Heart left ventricle (tissue), 16 donors: ENCODE measurements at regions of chr1 and their contacts with region 1.

Region 1: GRCh38 chr1:19918057-19918456 is 5.4 kb downstream of the PLA2G2E start:
- DNase-seq: peak; percentile 74 to 86 (median 79)
- ATAC-seq: peak; percentile 69 to 84 (median 71)
- H3K4me3 ChIP-seq: no peak overlapping the region
- H3K27ac ChIP-seq: no peak overlapping the region
- H3K4me1 ChIP-seq: peaks cover 0 to 11% (median 0%) of the 10 kb centered on the region in 12 donors
- H3K27me3 ChIP-seq: peaks cover 0 to 5% (median 0%) of the 10 kb centered on the region in 9 donors
- CTCF ChIP-seq: peak; percentile 83 to 94 (median 89)
- POLR2A ChIP-seq: no peak

Region 2: DNA sequence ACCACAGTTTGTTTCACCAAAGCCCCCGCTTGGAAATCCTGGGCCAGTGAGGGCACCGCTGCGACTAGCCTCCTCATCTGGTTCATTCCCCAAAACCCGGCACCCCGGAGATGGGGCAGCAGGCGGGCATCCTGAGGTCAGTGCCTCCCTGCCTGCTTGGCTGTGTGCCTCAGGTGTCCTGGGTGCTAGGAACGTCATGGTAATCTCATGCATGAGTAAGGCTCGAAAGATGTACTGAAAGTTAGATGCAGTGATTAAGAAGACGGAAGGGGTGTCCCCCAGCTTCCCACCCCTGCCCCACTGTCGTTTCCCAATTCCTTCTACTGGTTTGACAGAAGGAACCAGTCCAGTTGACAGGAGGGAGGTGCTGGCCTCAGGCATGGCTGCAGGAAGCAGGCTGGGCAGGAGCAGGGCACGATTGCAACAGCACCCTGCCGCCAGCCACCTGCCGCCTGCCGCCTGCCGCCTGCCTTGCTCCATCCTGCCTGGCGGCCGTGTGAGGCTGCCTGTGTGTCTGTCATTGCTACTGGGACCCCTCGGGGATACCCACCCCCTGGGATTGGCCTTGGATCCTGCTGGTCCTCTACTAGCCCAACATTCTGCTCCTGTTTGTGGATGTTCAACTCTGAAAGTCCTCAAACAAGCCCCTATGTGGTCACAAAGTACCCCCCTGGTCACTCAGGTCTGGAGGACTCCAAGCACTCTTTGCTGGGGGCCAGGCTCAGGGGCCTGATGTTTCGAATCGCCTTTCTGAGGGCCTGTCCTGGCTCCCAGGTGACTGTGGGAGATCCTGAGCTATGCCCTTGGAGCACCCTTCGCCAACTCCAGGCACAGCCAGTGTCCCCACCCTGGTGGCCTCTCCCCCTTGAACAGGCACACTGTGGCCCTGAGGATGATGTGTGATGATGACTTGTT is 888.6 kb before region 1 on chr1:
- intact Hi-C with region 1: loop called in 1 of 10 experiments (anchors 10 kb)
- DNase-seq: no peak
- ATAC-seq: peak in 1 of 4 donors; percentile 20
- H3K4me3 ChIP-seq: no peak overlapping the region
- H3K27ac ChIP-seq: no peak overlapping the region
- H3K4me1 ChIP-seq: peaks cover 0 to 3% (median 0%) of the 10 kb centered on the region in 12 donors
- H3K27me3 ChIP-seq: peaks cover 0 to 18% (median 7%) of the 10 kb centered on the region in 9 donors
- CTCF ChIP-seq: no peak
- POLR2A ChIP-seq: no peak

Region 3: DNA sequence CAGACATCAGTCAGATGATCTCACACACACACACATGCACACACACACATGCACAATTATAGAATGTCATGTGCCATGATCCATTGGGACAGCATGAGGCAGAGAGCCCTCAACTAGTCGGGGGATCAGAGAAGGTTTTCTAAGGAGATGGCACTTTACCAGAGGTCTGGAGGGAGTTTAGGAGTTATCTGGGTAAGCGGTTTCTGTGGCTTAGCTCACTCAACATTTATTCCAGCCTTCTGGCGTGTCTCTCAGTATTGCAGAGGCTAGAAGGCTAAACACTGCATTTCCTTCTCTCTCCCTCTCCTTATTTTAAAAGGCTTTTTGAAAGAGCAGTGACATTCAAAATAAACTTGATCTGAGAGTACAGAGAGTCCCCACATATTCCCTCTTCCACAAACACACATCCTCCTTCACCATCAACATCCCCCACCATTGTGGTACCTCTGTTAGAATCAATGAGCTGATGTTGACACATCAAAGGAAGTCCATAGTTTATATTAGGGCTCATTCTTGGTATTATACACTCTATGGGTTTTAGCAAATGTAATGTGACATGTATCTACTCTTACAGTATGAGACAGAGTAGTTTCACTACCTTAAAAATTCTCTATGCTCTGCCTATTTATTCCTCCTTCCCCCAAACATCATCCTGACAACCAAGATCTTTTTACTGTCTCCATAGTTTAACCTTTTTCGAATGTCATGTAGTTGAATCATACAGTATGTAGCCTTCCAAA is 70.4 kb after region 1 on chr1:
- intact Hi-C with region 1: no loop called
- DNase-seq: no peak
- ATAC-seq: peak in 1 of 4 donors; percentile 22
- H3K4me3 ChIP-seq: no peak overlapping the region
- H3K27ac ChIP-seq: peak overlapping the region in 2 of 12 donors; percentile 5 to 13
- H3K4me1 ChIP-seq: no peaks in the 10 kb centered on the region
- H3K27me3 ChIP-seq: peaks cover 0 to 8% (median 0%) of the 10 kb centered on the region in 9 donors
- CTCF ChIP-seq: no peak
- POLR2A ChIP-seq: no peak

Region 4: DNA sequence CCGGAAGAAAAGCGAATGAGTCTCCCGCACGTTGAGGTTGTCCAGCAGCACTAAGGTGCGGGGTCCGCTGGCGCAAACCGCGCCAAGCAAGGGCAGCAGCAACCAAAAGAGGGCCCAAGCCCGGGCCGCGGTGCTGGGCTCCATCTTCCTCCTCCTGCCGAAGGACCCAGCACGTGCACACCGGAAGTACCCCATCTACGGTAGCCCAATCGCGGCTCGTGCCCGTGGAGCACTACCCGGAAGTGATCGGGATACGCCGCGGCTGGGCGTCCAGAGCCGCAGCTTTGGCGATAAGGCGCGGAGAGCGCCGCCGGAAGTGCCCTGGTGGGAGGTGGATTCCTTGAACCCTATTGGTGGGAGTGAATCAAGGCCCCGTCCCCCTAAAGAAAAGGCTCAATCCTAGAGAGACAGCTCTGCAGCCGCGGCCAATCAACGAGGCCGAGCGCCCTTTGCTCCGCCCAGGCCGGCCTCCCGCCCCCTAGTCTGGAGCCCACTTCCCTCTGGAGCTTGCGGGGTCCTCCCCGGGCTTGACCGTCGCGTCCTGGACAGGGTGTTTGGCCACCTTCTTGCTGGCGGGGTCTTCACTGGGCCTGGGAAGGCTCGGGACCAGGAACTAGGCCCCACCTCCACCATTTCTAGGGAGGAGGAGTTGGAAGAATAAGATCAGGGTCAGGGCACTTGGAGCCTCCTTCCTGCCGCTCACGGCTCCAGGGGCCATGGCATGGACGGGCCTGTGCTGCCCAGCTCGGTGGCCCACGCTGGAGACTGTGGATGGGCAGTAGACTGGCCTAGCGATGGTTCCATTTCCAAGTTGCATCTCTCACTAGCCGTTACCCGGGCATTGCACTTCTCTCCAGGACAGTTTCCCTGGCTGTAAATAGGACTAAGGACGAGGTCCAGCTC is 743.4 kb after region 1 on chr1 and contains the start of gene DDOST:
- intact Hi-C with region 1: no loop called
- DNase-seq: peak; percentile 95 to 99 (median 97)
- ATAC-seq: peak; percentile 95 to 97 (median 96)
- H3K4me3 ChIP-seq: peak within 1 kb of the TSS; percentile 78 to 100 (median 88)
- H3K27ac ChIP-seq: peak within 1 kb of the TSS; percentile 41 to 97 (median 90)
- H3K4me1 ChIP-seq: peaks cover 4 to 52% (median 37%) of the 10 kb centered on the region in 12 donors
- H3K27me3 ChIP-seq: no peaks in the 10 kb centered on the region
- CTCF ChIP-seq: peak in 11 of 12 donors; percentile 18 to 74 (median 47)
- POLR2A ChIP-seq: peak in 1 of 2 donors; percentile 66
- total RNA-seq, gene DDOST: 110 to 175 (median 128) TPM